Posterior vena cava (tissue), 2 donors: ENCODE measurements at regions of chr9 and their contacts with region 1.

Region 1: GRCh38 chr9:17837965-17838364 is 259.1 kb downstream of the SH3GL2 start:
- DNase-seq: no peak

Region 2: DNA sequence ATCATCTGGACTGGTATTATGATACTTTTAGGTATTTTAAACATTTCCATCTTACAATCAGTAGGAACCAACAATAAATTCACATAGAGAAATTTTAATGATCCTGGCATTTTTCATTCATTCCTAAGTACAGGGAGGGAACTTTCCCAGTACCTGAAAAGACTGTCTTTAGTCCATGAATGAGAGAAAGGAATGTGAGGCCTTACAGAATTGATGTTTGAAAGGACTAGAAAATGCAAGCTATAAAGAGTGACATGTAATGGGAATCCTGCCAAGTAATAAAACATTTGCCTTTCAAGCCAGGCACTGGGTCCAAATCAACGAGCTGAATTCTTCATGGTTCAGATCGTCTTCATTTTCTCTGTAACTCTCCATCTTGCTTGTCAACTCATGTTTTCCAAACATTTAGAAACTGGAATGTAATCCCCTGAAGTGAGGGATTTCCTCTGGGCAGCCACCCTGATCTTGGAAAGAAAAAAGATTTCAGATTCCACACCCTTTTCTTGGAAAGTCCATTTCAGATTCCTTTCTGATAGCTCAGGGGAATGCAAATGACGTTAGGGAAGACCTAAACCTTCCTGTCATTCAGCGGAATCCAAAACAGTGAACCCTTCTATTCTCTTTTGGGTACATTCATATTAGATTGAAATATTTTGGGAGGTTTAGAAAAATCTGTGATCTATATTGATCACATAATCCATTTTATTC is 56.7 kb after region 1 on chr9:
- intact Hi-C with region 1: loop called in 1 of 2 experiments (anchors 10 kb)
- DNase-seq: no peak